ENCODE measurements at regions of chr5 and their contacts with region 1.

Region 1: GRCh38 chr5:65562731-65563701 is at the starts of genes CENPK and PPWD1:
- DNase-seq: peak; percentile 96 to 97
- H3K4me3 ChIP-seq: peak within 1 kb of the TSS; percentile 91
- H3K4me3 Mint-ChIP-seq: peak within 1 kb of the TSS; percentile 86
- H3K27ac Mint-ChIP-seq: peak within 1 kb of the TSS; percentile 95
- H3K4me1 ChIP-seq: peaks cover 5% of the 10 kb centered on the region; the same call in 1 of the 2 replicates
- H3K4me1 Mint-ChIP-seq: peaks cover 15% of the 10 kb centered on the region
- H3K27me3 ChIP-seq: no peaks in the 10 kb centered on the region
- H3K27me3 Mint-ChIP-seq: no peaks in the 10 kb centered on the region
- CTCF ChIP-seq: no peak
- total RNA-seq, gene CENPK: 56.4 TPM in 2 replicates
- total RNA-seq, gene PPWD1: 44.5 and 47.0 TPM in 2 replicates

Region 2: DNA sequence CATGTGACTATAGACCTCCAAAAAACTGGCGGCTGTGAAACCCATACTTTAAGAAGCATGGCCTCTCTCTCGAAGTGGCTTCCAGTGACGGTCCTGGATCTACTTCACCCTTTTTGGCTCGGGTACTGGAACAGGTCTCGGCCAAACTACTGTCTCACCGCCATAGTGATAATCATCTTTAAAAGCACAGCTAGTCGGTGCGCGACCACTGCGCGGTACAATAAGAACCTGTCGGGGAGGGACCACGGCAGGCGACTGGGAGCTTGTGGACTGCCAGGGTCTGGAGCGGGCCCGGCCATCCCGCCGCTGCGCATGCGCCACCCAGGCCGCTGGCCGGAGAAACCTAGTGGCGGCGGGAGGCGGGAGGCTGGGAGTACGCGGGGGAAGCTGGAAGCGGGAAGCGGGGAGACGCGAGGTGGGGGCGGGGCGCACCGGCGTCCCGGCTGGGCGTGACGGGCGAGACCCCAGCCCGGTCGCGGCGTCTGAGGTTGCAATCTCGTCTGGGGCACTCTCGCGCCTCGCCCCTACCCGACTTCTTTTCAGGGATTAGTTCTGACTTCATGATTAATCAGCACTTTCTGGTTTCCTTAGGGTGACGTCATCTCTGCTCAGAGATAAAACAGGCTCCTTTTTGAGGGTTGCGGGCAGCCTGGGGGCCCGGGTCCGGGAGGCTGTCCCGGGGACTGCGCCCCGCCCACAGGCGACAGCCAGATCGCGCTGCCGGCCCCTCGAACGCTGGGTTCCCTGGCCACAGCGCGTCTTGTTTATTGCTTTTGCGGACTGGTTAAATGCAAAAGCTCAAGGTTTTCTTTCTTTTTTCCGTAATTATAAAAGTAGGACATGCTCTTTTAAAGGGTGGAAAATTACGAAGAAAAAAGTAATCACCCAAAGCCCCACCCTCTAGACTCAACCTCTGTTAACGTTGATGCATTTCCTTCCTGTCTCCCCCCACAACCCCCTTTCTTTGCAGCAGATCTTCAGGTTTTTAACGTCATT is 527.5 kb before region 1 on chr5:
- CTCF ChIA-PET with region 1: no interaction called
- POLR2A ChIA-PET with region 1: no interaction called
- intact Hi-C with region 1: loop called (anchors 1 kb)
- DNase-seq: peak; percentile 92 to 96
- H3K4me3 ChIP-seq: peak overlapping the region; percentile 63
- H3K4me3 Mint-ChIP-seq: peak overlapping the region; percentile 79
- H3K27ac Mint-ChIP-seq: peak overlapping the region; percentile 84
- H3K4me1 ChIP-seq: peaks cover 7% of the 10 kb centered on the region; the same call in 1 of the 2 replicates
- H3K4me1 Mint-ChIP-seq: peaks cover 6% of the 10 kb centered on the region
- H3K27me3 ChIP-seq: no peaks in the 10 kb centered on the region
- H3K27me3 Mint-ChIP-seq: no peaks in the 10 kb centered on the region
- CTCF ChIP-seq: no peak

Region 3: DNA sequence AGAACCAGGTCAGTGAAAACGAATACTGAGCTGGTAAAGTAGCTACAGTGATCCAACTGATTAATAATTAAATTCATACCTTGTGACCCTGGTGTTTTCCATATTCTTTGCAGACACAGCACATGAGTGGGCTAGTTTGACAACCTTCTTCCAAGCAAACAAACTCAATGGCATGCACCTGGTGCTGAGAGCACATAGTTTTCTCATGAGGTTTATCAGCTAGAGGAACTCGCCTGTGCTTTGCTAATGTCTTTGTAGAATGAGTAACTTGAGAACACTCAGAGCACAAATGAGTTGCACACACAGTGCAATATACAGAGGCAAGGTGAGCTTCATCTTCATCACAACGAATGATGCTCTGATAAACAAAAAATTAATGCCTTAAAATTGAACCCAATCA is 48.5 kb after region 1 on chr5:
- CTCF ChIA-PET with region 1: no interaction called
- POLR2A ChIA-PET with region 1: interaction called, 19 read pairs
- intact Hi-C with region 1: no loop called
- DNase-seq: peak; percentile 81 to 86
- H3K4me3 ChIP-seq: no peak overlapping the region
- H3K4me3 Mint-ChIP-seq: peak overlapping the region; percentile 49
- H3K27ac Mint-ChIP-seq: peak overlapping the region; percentile 56
- H3K4me1 ChIP-seq: peaks cover 34% of the 10 kb centered on the region
- H3K4me1 Mint-ChIP-seq: peaks cover 25% of the 10 kb centered on the region
- H3K27me3 ChIP-seq: no peaks in the 10 kb centered on the region
- H3K27me3 Mint-ChIP-seq: no peaks in the 10 kb centered on the region
- CTCF ChIP-seq: no peak

Measured in Caco-2 (cell line).